ENCODE measurements at regions of chr11 and their contacts with region 1.

Region 1: GRCh38 chr11:94876645-94877442 is 96.5 kb downstream of the CWC15 start:
- DNase-seq: peak; percentile 85
- H3K4me3 Mint-ChIP-seq: peak overlapping the region; percentile 1
- H3K27ac Mint-ChIP-seq: peak overlapping the region; percentile 87
- H3K4me1 Mint-ChIP-seq: peaks cover 24% of the 10 kb centered on the region
- H3K27me3 Mint-ChIP-seq: no peaks in the 10 kb centered on the region
- CTCF ChIP-seq: peak; percentile 34

Region 2: GRCh38 chr11:94786264-94787126 is 90.3 kb before region 1 on chr11:
- CTCF ChIA-PET with region 1: no interaction called
- POLR2A ChIA-PET with region 1: no interaction called
- intact Hi-C with region 1: loop called (anchors 2 kb)
- DNase-seq: peak; percentile 56
- H3K4me3 Mint-ChIP-seq: no peak overlapping the region
- H3K27ac Mint-ChIP-seq: no peak overlapping the region
- H3K4me1 Mint-ChIP-seq: peaks cover 53% of the 10 kb centered on the region
- H3K27me3 Mint-ChIP-seq: no peaks in the 10 kb centered on the region
- CTCF ChIP-seq: peak; percentile 47